Left ventricle myocardium superior (tissue), 1 donor: ENCODE measurements at regions of chr4 and their contacts with region 1.

Region 1: GRCh38 chr4:138182838-138183426 is 59.2 kb downstream of the SLC7A11 start:
- DNase-seq: no peak
- ATAC-seq: peak; percentile 65

Region 2: GRCh38 chr4:137740141-137740540 is 442.8 kb before region 1 on chr4:
- intact Hi-C with region 1: no loop called
- DNase-seq: no peak
- ATAC-seq: no peak

Region 3: GRCh38 chr4:138090150-138090917 is 92.6 kb before region 1 on chr4:
- intact Hi-C with region 1: no loop called
- DNase-seq: no peak
- ATAC-seq: peak; percentile 83

Region 4: DNA sequence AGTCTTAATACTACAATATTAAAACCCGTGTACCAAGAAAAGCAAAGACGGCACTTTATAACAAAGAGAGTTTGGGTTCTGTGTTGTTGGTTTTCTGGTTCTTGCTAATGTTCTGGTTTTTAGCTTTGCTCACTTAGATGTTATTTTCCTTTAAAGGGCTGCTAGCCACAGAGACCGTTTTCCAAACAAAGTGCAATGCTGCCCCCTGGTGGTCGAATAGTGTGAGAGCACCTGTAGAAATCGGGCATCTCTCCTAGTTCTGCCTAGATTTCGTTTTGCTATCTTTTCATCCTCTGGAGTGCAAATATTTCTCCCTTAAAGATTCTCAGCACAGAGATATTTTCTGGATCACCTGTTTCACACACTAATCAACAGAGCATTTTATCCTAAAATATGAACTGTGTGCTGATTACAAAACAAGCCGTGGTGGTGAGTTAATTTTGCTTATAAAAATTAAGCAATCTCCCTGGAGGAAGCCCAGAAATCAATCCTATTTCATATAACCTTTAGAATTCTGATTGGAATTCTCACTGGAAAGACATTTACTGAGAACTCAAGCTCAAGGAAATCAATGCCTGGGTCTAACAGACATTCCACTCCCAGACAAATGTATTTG is 498.2 kb after region 1 on chr4:
- intact Hi-C with region 1: loop called (anchors 10 kb)
- DNase-seq: peak; percentile 79
- ATAC-seq: peak; percentile 59